Mammary epithelial cell (primary cell): ENCODE measurements at regions of chr4 and their contacts with region 1.

Region 1: DNA sequence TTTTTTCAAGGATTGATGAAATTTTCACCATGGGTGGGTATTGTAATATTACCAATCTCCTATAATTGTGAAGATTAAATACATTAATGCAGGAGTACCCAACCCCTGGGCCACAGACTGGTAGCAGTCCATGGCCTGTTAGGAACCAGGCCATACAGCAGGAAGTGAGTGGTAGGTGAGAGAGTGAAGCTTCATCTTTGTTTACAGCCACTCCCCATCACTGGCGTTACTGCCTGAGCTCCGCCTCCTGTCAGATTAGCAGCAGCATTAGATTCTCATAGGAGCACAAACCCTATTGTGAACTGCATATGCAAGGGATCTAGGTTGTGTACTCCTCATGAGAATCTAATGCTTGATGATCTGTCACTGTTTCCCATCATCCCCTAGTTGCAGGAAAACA is 15.1 kb downstream of the RAPGEF2 start:
- DNase-seq: no peak
- H3K4me3 ChIP-seq: no peak overlapping the region
- H3K27ac ChIP-seq: no peak overlapping the region
- H3K4me1 ChIP-seq: no peaks in the 10 kb centered on the region
- H3K27me3 ChIP-seq: no peaks in the 10 kb centered on the region
- CTCF ChIP-seq: no peak

Region 2: GRCh38 chr4:159150821-159151390 is 32.9 kb after region 1 on chr4:
- CTCF ChIA-PET with region 1: no interaction called
- dilution Hi-C with region 1: loop called (anchors 5 kb)
- in situ Hi-C with region 1: no loop called
- intact Hi-C with region 1: no loop called
- DNase-seq: no peak
- H3K4me3 ChIP-seq: no peak overlapping the region
- H3K27ac ChIP-seq: no peak overlapping the region
- H3K4me1 ChIP-seq: peaks cover 7% of the 10 kb centered on the region
- H3K27me3 ChIP-seq: no peaks in the 10 kb centered on the region
- CTCF ChIP-seq: no peak

Region 3: GRCh38 chr4:159191989-159192388 is 74.0 kb after region 1 on chr4:
- CTCF ChIA-PET with region 1: no interaction called
- dilution Hi-C with region 1: loop called (anchors 5 kb)
- in situ Hi-C with region 1: no loop called
- intact Hi-C with region 1: no loop called
- DNase-seq: peak; percentile 53
- H3K4me3 ChIP-seq: no peak overlapping the region
- H3K27ac ChIP-seq: no peak overlapping the region
- H3K4me1 ChIP-seq: peaks cover 4% of the 10 kb centered on the region
- H3K27me3 ChIP-seq: no peaks in the 10 kb centered on the region
- CTCF ChIP-seq: peak; percentile 56 to 75